K562 (cell line): ENCODE measurements at regions of chr20 and their contacts with region 1.

Region 1: GRCh38 chr20:47620808-47621805 is 119.4 kb downstream of the NCOA3 start:
- DNase-seq: peak in 3 of 4 experiments; percentile 32 to 63 (median 42)
- ATAC-seq: peak; percentile 73
- H3K4me3 ChIP-seq: no peak overlapping the region
- H3K27ac ChIP-seq: no peak overlapping the region
- H3K4me1 ChIP-seq: peaks cover 0 to 3% of the 10 kb centered on the region in 2 experiments; a peak in 1 of 5 replicates
- H3K27me3 ChIP-seq: no peaks in the 10 kb centered on the region
- CTCF ChIP-seq: peak in 2 of 3 experiments; percentile 57 to 90; a peak in 4 of 6 replicates
- EP300 ChIP-seq: no peak
- POLR2A ChIP-seq: no peak
- RAD21 ChIP-seq: peak; percentile 79 to 84

Region 2: DNA sequence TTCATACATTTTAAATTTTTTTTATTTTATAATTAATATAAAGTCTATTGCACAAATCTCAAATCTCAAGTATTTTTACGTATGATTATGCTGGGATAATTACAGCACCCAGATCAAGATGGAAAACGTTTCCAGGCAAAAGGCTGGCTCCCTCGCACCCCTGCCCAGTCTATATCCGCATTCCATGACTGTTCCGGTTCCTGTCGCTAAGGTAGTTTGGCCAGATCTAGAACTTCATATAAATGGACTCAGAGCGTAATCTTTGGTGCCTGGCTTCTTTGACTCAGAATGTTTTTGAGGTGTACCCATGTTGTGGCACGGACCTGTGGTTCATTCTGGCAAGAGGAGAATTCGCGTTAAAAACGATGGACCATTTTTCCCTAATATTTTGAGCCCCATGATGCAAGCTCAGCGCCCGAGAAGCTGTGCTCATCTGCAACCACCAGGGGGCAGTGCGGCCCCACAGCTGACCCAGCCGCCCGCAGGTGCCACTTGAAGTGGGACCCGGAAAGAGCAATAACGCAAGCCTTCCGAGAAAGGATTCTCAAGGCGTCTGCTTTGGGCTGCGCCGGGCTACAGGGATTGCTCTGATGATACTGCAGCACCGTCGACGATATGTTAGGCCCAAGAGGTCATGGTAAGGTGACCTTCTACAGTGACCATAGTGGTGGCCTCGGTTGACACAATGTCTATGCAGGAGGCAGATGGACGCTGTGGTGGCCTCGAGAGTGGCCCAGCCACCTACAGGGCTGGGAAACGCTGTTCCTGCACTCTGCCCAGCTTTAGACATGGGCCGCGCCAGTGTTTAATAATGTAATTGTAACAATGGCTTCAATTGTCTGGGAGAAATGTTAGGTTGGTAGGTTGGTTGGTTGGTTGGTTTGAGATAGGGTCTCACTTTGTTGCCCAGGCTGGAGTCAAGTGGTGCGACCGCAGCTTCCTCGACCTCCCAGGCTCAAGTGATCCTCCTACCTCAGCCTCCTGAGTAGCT is 424.7 kb before region 1 on chr20:
- CTCF ChIA-PET with region 1: interaction called, 4 read pairs
- POLR2A ChIA-PET with region 1: no interaction called
- in situ Hi-C with region 1: loop called (anchors 10 kb)
- intact Hi-C with region 1: loop called (anchors 2 kb)
- DNase-seq: peak; percentile 83 to 87 (median 84)
- ATAC-seq: peak; percentile 90
- H3K4me3 ChIP-seq: no peak overlapping the region
- H3K27ac ChIP-seq: no peak overlapping the region
- H3K4me1 ChIP-seq: peaks cover 8 to 17% of the 10 kb centered on the region in 2 experiments
- H3K27me3 ChIP-seq: peaks cover 0 to 5% of the 10 kb centered on the region in 2 experiments; a peak in 2 of 5 replicates
- CTCF ChIP-seq: peak; percentile 93 to 98 (median 95)
- EP300 ChIP-seq: no peak
- POLR2A ChIP-seq: no peak
- RAD21 ChIP-seq: peak; percentile 90 to 97

Region 3: DNA sequence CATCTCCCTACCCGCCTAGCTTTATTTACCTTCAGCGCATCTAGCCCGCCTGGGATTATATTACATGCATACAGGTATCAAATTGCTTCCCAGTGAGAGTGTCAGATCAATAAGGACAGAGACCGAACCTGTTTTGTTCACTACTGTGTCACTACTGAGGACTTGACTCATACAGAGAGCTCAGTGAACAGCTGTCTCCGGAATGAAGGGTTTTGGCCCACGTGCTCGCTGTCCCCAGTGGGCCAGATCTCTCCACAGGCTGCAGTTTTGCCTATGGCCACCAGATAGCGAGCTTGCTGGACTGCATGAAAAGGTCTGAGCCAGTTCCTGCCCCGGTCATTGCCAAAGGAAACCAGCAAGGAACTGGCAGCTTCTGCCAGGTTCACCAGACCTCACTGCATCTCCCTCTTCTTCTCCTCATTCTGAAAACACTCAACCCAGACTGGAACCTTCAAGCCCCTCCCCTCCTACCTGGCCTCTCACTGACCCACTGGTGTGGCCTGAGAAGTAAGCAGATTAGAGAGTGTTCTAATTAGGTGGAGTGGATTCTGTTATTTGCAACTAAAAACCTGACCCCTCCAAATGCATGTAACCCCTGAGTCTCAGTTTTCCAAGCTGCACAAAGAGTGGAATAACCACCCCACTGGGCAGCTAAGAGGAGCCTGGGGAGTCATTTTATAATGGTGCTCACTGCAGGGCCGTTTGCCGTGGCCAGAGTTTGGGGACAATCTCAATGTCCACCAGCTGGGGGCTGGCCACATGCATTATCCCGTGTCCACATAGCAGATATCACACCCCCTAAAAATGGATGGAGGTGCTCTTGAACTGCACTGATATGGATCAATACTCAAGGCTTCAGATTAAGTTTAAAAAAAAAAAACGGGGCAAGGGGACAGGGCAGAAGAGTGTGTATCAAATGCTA is 415.3 kb before region 1 on chr20:
- CTCF ChIA-PET with region 1: no interaction called
- POLR2A ChIA-PET with region 1: no interaction called
- in situ Hi-C with region 1: loop called (anchors 10 kb)
- intact Hi-C with region 1: no loop called
- DNase-seq: peak; percentile 66 to 76 (median 70)
- ATAC-seq: peak; percentile 85
- H3K4me3 ChIP-seq: no peak overlapping the region
- H3K27ac ChIP-seq: peak overlapping the region; percentile 41; the same call in 2 of the 3 replicates
- H3K4me1 ChIP-seq: peaks cover 12 to 21% of the 10 kb centered on the region in 2 experiments; a peak in 3 of 5 replicates
- H3K27me3 ChIP-seq: no peaks in the 10 kb centered on the region
- CTCF ChIP-seq: peak; percentile 68 to 90 (median 78)
- EP300 ChIP-seq: no peak
- POLR2A ChIP-seq: no peak
- RAD21 ChIP-seq: peak; percentile 22 to 68; a peak in 3 of 4 replicates

Region 4: GRCh38 chr20:47272893-47273590 is 348.1 kb before region 1 on chr20:
- CTCF ChIA-PET with region 1: interaction called, 23 read pairs
- POLR2A ChIA-PET with region 1: no interaction called
- in situ Hi-C with region 1: no loop called
- intact Hi-C with region 1: loop called (anchors 5 kb)
- DNase-seq: peak; percentile 54 to 73 (median 64)
- ATAC-seq: peak; percentile 74
- H3K4me3 ChIP-seq: no peak overlapping the region
- H3K27ac ChIP-seq: no peak overlapping the region
- H3K4me1 ChIP-seq: peaks cover 5 to 7% of the 10 kb centered on the region in 2 experiments; a peak in 3 of 5 replicates
- H3K27me3 ChIP-seq: no peaks in the 10 kb centered on the region
- CTCF ChIP-seq: peak; percentile 74 to 82 (median 79)
- EP300 ChIP-seq: no peak
- POLR2A ChIP-seq: no peak
- RAD21 ChIP-seq: peak; percentile 80 to 83

Region 5: GRCh38 chr20:47397652-47398301 is 223.3 kb before region 1 on chr20:
- CTCF ChIA-PET with region 1: no interaction called
- POLR2A ChIA-PET with region 1: no interaction called
- in situ Hi-C with region 1: loop called (anchors 5 kb)
- intact Hi-C with region 1: no loop called
- DNase-seq: no peak
- ATAC-seq: peak; percentile 26; the same call in 1 of the 3 replicates
- H3K4me3 ChIP-seq: no peak overlapping the region
- H3K27ac ChIP-seq: no peak overlapping the region
- H3K4me1 ChIP-seq: peaks cover 5 to 11% of the 10 kb centered on the region in 2 experiments; a peak in 4 of 5 replicates
- H3K27me3 ChIP-seq: no peaks in the 10 kb centered on the region
- CTCF ChIP-seq: no peak
- EP300 ChIP-seq: no peak
- POLR2A ChIP-seq: no peak
- RAD21 ChIP-seq: no peak

Region 6: DNA sequence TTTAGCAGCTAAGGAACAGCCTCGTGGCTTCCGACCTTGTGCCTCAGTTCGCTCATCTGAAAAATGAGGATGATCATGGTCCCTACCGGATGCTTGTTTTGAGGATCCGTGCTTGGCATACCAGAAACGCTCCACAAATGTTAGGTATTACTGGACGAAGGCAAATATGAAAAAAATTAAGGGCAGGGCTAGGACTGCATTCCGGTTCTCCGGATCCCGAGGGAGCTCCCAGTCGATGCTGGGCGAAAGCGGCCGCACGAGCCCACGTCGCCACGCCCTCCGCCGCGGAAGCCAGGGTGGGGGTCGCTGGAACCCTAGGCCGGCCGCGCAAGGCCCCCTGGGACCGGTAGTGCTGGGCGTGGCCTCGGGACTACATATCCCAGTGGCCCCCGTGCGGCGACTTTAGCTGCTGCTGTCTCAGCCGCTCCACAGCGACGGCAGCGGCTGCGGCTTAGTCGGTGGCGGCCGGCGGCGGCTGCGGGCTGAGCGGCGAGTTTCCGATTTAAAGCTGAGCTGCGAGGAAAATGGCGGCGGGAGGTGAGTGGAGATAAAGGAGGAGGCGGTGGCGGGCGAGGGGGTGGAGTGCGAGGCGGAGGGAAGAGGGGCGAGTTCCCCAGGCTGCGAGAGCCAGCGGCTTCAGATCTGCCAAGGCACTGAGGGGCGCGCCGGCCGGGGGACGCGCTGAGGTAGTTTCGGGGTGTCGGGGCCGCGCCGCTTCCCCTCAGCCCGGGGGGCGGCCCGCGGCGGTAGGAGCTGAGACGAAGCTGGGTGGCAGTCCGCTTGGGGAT is 119.4 kb before region 1 on chr20 and contains the start of gene NCOA3:
- CTCF ChIA-PET with region 1: no interaction called
- POLR2A ChIA-PET with region 1: no interaction called
- in situ Hi-C with region 1: loop called (anchors 10 kb)
- intact Hi-C with region 1: loop called (anchors 5 kb)
- DNase-seq: peak; percentile 97 to 98 (median 98)
- ATAC-seq: peak; percentile 96
- H3K4me3 ChIP-seq: peak within 1 kb of the TSS; percentile 98
- H3K27ac ChIP-seq: peak within 1 kb of the TSS; percentile 82
- H3K4me1 ChIP-seq: peaks cover 6 to 8% of the 10 kb centered on the region in 2 experiments; a peak in 3 of 5 replicates
- H3K27me3 ChIP-seq: no peaks in the 10 kb centered on the region
- CTCF ChIP-seq: peak; percentile 26 to 44 (median 33); a peak in 3 of 6 replicates
- EP300 ChIP-seq: peak; percentile 32
- POLR2A ChIP-seq: peak; percentile 96
- RAD21 ChIP-seq: peak; percentile 33 to 34; a peak in 3 of 4 replicates
- polyA plus RNA-seq, gene NCOA3: 3.2 to 4.7 TPM

Region 7: DNA sequence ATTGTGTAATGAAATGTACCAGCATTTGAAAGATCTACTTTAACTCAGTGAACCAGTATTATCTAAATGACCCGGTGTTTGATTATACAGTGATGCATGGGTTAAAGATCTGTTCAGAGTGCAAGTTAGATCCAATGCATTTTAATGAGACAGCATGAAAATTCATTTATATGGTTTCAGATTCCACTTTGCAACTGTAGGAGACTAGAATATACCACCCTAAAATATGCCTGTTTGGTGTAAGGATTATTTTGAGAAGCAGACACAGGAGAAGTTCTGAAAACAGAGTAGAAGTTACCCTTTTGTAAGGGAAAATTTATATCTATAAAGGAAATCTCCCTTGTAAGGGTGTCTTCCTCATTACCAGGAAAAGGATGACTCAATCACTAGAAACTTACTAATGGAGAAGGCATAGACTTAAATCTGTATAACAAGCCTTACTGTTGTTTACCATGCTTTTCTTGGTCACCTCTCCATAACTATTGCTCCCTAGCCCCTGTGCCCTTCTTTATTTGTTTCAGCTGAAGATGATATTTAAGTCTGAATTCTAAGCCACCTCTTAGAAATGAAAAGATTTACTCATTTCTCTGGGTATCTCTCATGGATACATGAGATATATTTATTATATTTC is 14.0 kb before region 1 on chr20:
- CTCF ChIA-PET with region 1: no interaction called
- POLR2A ChIA-PET with region 1: interaction called, 10 read pairs
- in situ Hi-C with region 1: no loop called
- intact Hi-C with region 1: no loop called
- DNase-seq: peak in 3 of 4 experiments; percentile 13 to 68 (median 66)
- ATAC-seq: peak; percentile 75
- H3K4me3 ChIP-seq: no peak overlapping the region
- H3K27ac ChIP-seq: peak overlapping the region; percentile 86
- H3K4me1 ChIP-seq: peaks cover 6 to 47% of the 10 kb centered on the region in 2 experiments
- H3K27me3 ChIP-seq: no peaks in the 10 kb centered on the region
- CTCF ChIP-seq: no peak
- EP300 ChIP-seq: peak; percentile 96
- POLR2A ChIP-seq: peak; percentile 24; the same call in 1 of the 2 replicates
- RAD21 ChIP-seq: peak in 1 of 2 experiments; percentile 21; a peak in 1 of 4 replicates